HepG2 (cell line): ENCODE measurements at regions of chr4 and their contacts with region 1.

Region 1: DNA sequence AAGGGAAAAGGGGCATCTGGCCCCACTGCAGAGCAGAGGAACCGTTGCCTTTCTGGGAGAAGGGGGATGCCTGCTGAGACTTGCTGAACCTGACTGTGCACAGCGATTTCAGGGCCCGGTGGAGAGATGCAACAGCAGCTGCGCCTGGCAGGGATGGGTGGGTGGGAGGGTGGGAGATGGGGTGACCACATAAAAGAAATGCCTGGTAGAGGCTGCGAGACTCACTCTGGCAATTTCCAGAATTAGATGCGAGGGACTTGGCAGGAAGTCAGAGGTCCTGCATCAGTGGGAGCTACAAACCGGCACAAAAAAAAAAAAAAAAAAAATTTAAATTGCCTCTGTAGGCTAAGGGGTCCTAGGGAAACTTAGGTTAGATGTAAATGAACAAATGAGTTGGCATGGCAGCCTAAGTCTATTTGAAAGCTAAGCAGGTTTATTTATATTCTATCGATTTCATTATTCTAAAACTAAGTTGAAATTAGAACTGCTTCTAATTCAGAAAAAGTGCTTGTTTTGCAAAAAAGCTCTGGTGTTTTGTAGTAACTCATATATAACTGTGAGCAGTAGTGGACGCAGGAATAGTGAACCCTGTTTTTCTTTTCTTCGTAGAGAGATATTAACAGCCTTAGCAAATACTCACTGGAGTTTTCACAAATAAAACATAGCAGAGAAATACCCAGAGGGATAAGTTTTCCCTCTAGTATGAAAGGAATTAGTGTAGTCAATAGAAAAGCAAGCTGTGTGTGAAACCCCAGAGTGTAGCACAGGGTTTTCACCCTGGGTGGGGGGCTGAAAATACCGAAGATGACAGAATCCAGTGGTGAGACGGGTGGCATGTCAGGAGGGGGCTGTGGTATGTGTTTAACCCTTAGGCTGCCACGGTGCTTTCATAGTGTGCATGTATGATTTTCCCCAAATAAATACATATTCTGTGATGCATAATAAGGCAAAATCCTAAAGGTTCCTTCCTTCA is 130.1 kb downstream of the EGF start:
- DNase-seq: no peak
- ATAC-seq: peak; percentile 12
- H3K4me3 ChIP-seq: no peak overlapping the region
- H3K27ac ChIP-seq: no peak overlapping the region
- H3K4me1 ChIP-seq: peaks cover 22% of the 10 kb centered on the region
- H3K27me3 ChIP-seq: no peaks in the 10 kb centered on the region
- CTCF ChIP-seq: no peak
- EP300 ChIP-seq: no peak
- POLR2A ChIP-seq: no peak
- RAD21 ChIP-seq: no peak

Region 2: DNA sequence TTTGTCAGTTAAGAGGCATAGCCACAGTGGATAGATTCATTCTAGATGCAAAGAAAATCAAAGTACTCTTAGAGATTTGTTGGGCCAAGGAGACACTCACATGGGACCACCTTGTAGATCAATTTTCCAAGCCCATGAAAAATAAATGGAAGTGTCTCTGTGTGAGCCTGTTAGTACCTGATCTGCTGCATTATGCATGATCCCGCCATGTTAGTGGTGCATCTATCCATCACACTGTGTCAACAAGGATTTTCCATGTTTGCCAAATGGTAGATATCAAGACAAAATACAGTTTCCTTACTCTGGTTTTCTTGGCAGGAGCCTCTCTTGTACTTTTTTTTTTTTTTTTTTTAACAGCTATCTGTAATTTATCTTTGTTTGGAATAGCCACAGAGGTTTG is 17.8 kb before region 1 on chr4:
- CTCF ChIA-PET with region 1: no interaction called
- POLR2A ChIA-PET with region 1: no interaction called
- in situ Hi-C with region 1: no loop called
- intact Hi-C with region 1: loop called (anchors 1 kb)
- DNase-seq: no peak
- ATAC-seq: no peak
- H3K4me3 ChIP-seq: no peak overlapping the region
- H3K27ac ChIP-seq: no peak overlapping the region
- H3K4me1 ChIP-seq: peaks cover 5% of the 10 kb centered on the region
- H3K27me3 ChIP-seq: peaks cover 0 to 10% of the 10 kb centered on the region in 2 experiments; a peak in 2 of 5 replicates
- CTCF ChIP-seq: no peak
- EP300 ChIP-seq: no peak
- POLR2A ChIP-seq: no peak
- RAD21 ChIP-seq: no peak

Region 3: DNA sequence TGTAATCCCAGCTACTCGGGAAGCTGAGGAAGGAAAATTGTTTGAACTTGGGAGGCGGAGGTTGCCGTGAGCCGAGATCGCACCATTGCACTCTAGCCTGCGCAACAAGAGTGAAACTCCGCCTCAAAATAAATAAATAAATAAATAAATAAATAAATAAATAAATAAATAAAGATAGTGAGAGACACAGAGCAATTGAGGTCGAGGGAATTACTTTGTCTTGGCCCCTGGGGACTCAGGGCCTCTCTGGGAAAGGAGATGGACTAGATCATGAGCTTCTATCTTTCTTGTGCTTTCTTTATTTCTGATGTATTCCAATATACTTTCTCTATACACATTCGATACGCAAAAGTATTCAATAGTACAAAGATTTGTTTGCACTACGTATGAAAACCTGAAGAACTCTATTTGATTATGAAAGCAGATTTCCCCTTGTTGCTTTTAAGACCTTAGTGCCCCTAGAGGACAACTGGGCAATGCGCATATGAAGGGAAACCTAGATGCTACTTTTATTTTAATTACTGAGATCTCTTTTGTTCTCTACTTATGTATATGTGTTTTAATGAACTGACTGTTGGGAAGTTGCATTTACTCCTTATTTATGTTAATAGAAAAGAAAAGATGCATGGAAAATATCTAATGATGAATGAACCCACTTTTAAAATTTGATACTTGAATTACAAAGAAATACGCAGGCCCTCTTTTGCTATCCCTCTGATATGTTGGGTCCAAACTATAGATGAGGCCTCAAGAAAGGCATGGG is 168.4 kb after region 1 on chr4:
- CTCF ChIA-PET with region 1: no interaction called
- POLR2A ChIA-PET with region 1: no interaction called
- in situ Hi-C with region 1: no loop called
- intact Hi-C with region 1: no loop called
- DNase-seq: peak; percentile 53
- ATAC-seq: peak; percentile 81
- H3K4me3 ChIP-seq: peak overlapping the region in 1 of 3 experiments; percentile 15; a peak in 2 of 6 replicates
- H3K27ac ChIP-seq: no peak overlapping the region
- H3K4me1 ChIP-seq: no peaks in the 10 kb centered on the region
- H3K27me3 ChIP-seq: no peaks in the 10 kb centered on the region
- CTCF ChIP-seq: peak; percentile 56
- EP300 ChIP-seq: no peak
- POLR2A ChIP-seq: no peak
- RAD21 ChIP-seq: 0 out of 2 replicates have a peak, but pooled peaks have one; percentile 25

Region 4: GRCh38 chr4:110411574-110412011 is 368.8 kb after region 1 on chr4:
- CTCF ChIA-PET with region 1: no interaction called
- POLR2A ChIA-PET with region 1: no interaction called
- in situ Hi-C with region 1: no loop called
- intact Hi-C with region 1: no loop called
- DNase-seq: no peak
- ATAC-seq: no peak
- H3K4me3 ChIP-seq: no peak overlapping the region
- H3K27ac ChIP-seq: no peak overlapping the region
- H3K4me1 ChIP-seq: no peaks in the 10 kb centered on the region
- H3K27me3 ChIP-seq: no peaks in the 10 kb centered on the region
- CTCF ChIP-seq: no peak
- EP300 ChIP-seq: no peak
- POLR2A ChIP-seq: no peak
- RAD21 ChIP-seq: no peak